WTC11 (cell line): ENCODE measurements at regions of chr12 and their contacts with region 1.

Region 1: GRCh38 chr12:52884526-52885293 is 20.2 kb downstream of the KRT8 start:
- DNase-seq: peak; percentile 92
- ATAC-seq: peak; percentile 74
- H3K4me3 Mint-ChIP-seq: no peak overlapping the region
- H3K27ac Mint-ChIP-seq: no peak overlapping the region
- H3K4me1 Mint-ChIP-seq: no peaks in the 10 kb centered on the region
- H3K27me3 Mint-ChIP-seq: no peaks in the 10 kb centered on the region; the same call in 1 of the 2 replicates
- CTCF ChIP-seq: peak; percentile 98

Region 2: GRCh38 chr12:52895061-52895887 is 10.6 kb after region 1 on chr12:
- CTCF ChIA-PET with region 1: interaction called, 29 read pairs
- POLR2A ChIA-PET with region 1: no interaction called
- DNase-seq: no peak
- ATAC-seq: no peak
- H3K4me3 Mint-ChIP-seq: no peak overlapping the region
- H3K27ac Mint-ChIP-seq: no peak overlapping the region
- H3K4me1 Mint-ChIP-seq: no peaks in the 10 kb centered on the region
- H3K27me3 Mint-ChIP-seq: no peaks in the 10 kb centered on the region
- CTCF ChIP-seq: no peak

Region 3: GRCh38 chr12:52903285-52903854 is 18.7 kb after region 1 on chr12:
- CTCF ChIA-PET with region 1: interaction called, 48 read pairs
- POLR2A ChIA-PET with region 1: interaction called, 5 read pairs
- DNase-seq: peak; percentile 90
- ATAC-seq: peak; percentile 56
- H3K4me3 Mint-ChIP-seq: peak overlapping the region; percentile 92
- H3K27ac Mint-ChIP-seq: 0 out of 2 replicates have a peak overlapping the region, but pooled peaks have one; percentile 32
- H3K4me1 Mint-ChIP-seq: peaks cover 43% of the 10 kb centered on the region
- H3K27me3 Mint-ChIP-seq: no peaks in the 10 kb centered on the region
- CTCF ChIP-seq: no peak

Region 4: GRCh38 chr12:52949413-52950331 is 65.0 kb after region 1 on chr12:
- CTCF ChIA-PET with region 1: interaction called, 17 read pairs
- POLR2A ChIA-PET with region 1: interaction called, 10 read pairs
- DNase-seq: peak; percentile 43
- ATAC-seq: peak; percentile 30
- H3K4me3 Mint-ChIP-seq: peak overlapping the region; percentile 94
- H3K27ac Mint-ChIP-seq: peak overlapping the region; percentile 87
- H3K4me1 Mint-ChIP-seq: peaks cover 65% of the 10 kb centered on the region
- H3K27me3 Mint-ChIP-seq: no peaks in the 10 kb centered on the region
- CTCF ChIP-seq: no peak

Region 5: DNA sequence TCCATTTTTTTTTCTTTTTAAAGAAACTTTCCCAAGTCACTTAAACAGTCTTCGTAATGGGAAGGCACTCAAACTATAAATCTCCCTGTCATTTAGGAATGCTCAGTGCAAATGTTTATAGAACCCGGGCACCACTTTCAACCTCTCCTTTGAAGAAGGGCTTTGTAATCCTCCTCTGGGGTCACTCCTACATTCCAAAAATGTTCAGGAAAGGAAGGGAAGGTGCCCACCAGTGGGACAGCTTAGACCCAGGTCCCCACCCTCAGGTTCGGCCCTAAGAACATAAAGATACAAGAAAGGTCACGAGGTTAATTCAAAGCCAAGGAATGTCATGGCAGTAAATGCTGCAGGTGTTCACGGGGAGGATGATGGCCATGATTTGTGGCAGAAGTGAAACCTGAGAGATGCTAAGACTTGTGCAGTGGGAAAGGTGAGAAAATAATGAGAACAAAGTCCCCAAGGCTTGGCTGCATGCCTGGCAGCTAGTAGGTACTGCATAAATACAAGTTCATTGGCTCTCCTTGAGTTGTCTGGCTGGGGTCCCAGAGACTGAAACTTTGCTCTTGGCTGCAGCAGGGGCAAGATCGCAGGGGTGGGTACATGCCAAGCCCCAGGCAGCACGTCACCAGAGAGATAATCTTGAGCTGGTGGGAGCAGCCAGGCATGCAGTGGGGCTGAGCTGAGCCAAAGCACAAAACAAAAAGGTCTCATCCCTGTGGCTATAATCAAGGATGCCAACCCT is 85.3 kb after region 1 on chr12:
- CTCF ChIA-PET with region 1: interaction called, 21 read pairs
- POLR2A ChIA-PET with region 1: interaction called, 3 read pairs
- DNase-seq: no peak
- ATAC-seq: no peak
- H3K4me3 Mint-ChIP-seq: no peak overlapping the region
- H3K27ac Mint-ChIP-seq: no peak overlapping the region; the same call in 1 of the 2 replicates
- H3K4me1 Mint-ChIP-seq: peaks cover 26% of the 10 kb centered on the region
- H3K27me3 Mint-ChIP-seq: peaks cover 42% of the 10 kb centered on the region
- CTCF ChIP-seq: no peak

Region 6: GRCh38 chr12:53005986-53006809 is 121.5 kb after region 1 on chr12 and contains the start of gene EIF4B:
- CTCF ChIA-PET with region 1: interaction called, 18 read pairs
- POLR2A ChIA-PET with region 1: no interaction called
- DNase-seq: peak; percentile 100
- ATAC-seq: peak; percentile 90
- H3K4me3 Mint-ChIP-seq: peak within 1 kb of the TSS; percentile 99
- H3K27ac Mint-ChIP-seq: peak within 1 kb of the TSS; percentile 100
- H3K4me1 Mint-ChIP-seq: peaks cover 50% of the 10 kb centered on the region
- H3K27me3 Mint-ChIP-seq: no peaks in the 10 kb centered on the region
- CTCF ChIP-seq: no peak
- total RNA-seq, gene EIF4B: 730 to 860 TPM (median 838 TPM) in 3 replicates

Region 7: GRCh38 chr12:53047221-53048042 is 162.7 kb after region 1 on chr12:
- CTCF ChIA-PET with region 1: interaction called, 12 read pairs
- POLR2A ChIA-PET with region 1: no interaction called
- DNase-seq: peak; percentile 81
- ATAC-seq: peak; percentile 27
- H3K4me3 Mint-ChIP-seq: peak overlapping the region; percentile 62
- H3K27ac Mint-ChIP-seq: no peak overlapping the region
- H3K4me1 Mint-ChIP-seq: peaks cover 80% of the 10 kb centered on the region
- H3K27me3 Mint-ChIP-seq: peaks cover 40% of the 10 kb centered on the region
- CTCF ChIP-seq: peak; percentile 41; the same call in 1 of the 2 replicates